CD4-positive, alpha-beta T cell (primary cell): ENCODE measurements at regions of chr7 and their contacts with region 1.

Region 1: DNA sequence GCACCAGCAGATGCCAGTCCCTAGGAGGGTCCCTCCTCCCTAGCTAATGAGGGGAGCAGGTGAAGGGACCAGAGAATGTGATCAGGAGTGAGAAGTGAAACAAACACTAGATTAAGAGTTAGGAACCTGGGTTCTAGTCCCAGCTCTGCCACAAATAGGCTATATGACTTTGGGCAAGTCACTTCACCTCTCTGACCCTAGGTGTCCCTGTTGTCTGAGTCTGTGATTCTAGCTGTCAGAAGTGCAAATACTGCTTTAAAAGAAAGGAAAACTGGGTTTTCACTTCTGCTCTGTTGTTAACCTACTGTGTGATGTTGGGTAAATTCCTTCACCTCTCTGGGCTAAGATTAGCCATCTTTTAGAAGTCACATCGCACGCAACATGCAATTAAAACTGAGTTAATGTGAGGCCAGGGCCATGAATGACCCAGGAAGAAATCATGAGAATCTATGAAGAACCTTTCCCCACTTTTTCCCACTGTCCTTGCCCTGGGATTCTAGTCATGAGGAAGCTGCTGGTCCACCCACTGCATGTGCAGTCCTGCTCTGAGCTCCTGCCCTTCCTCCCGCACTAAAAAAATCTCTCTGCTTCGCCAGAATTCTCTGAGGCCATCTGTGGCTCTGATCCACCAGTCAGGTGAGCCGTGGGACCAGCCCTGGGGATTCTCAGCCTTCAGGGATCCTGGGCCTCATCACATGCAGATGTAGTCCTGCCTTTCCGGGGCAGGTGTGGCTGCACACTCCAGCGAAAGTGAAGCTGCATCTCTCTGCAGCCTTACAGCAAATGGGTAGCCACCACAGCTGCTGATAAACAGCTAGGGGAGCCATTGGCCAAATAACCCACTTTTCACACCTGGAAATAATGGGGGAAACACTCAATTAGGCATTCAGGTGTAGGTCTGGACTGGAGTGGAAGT is 181.7 kb downstream of the PLXNA4 start:
- DNase-seq: peak in 5 of 14 experiments; percentile 11 to 66 (median 58)
- ATAC-seq: no peak
- H3K4me3 ChIP-seq: no peak overlapping the region
- H3K4me3 Mint-ChIP-seq: no peak overlapping the region
- H3K27ac ChIP-seq: no peak overlapping the region
- H3K27ac Mint-ChIP-seq: no peak overlapping the region
- H3K4me1 ChIP-seq: peaks cover 7% of the 10 kb centered on the region
- H3K4me1 Mint-ChIP-seq: peaks cover 4% of the 10 kb centered on the region
- H3K27me3 ChIP-seq: no peaks in the 10 kb centered on the region
- H3K27me3 Mint-ChIP-seq: peaks cover under 1% of the 10 kb centered on the region
- CTCF ChIP-seq: peak; percentile 63

Region 2: DNA sequence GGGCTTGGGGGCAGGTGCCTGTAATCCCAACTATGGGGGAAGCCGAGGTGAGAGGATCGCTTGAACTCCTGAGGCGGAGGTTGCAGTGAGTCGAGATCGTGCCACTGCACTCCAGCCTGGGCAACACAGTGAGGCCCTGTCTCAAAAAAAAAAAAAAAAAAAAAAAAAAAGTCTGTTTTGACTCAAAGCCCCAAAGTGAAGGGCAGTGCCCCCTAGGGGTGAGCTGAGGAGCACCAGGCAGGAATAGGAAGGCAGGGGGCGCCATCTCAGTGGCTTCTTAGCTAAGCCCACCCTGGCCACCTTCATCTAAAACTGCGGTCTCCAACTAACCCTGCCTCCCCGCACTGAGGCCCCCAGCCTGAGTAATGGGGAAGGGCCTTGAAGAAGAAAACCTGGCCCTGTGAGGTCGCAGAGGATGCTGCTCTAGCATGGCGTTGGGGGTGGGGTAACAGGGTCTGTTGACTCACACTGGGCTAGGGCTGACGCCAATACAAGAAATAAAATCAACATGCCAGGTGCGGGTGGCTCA is 847.9 kb before region 1 on chr7:
- CTCF ChIA-PET with region 1: no interaction called
- POLR2A ChIA-PET with region 1: no interaction called
- intact Hi-C with region 1: no loop called
- DNase-seq: peak in 10 of 14 experiments; percentile 3 to 73 (median 26)
- ATAC-seq: peak; percentile 59
- H3K4me3 ChIP-seq: no peak overlapping the region
- H3K4me3 Mint-ChIP-seq: no peak overlapping the region
- H3K27ac ChIP-seq: no peak overlapping the region
- H3K27ac Mint-ChIP-seq: no peak overlapping the region
- H3K4me1 ChIP-seq: no peaks in the 10 kb centered on the region
- H3K4me1 Mint-ChIP-seq: no peaks in the 10 kb centered on the region
- H3K27me3 ChIP-seq: no peaks in the 10 kb centered on the region
- H3K27me3 Mint-ChIP-seq: peaks cover 16% of the 10 kb centered on the region
- CTCF ChIP-seq: peak; percentile 44

Region 3: GRCh38 chr7:132580717-132581285 is 186.3 kb after region 1 on chr7:
- CTCF ChIA-PET with region 1: interaction called, 70 read pairs
- POLR2A ChIA-PET with region 1: interaction called, 7 read pairs
- intact Hi-C with region 1: loop called (anchors 1 kb)
- DNase-seq: peak; percentile 43 to 84 (median 58)
- ATAC-seq: peak; percentile 75
- H3K4me3 ChIP-seq: no peak overlapping the region
- H3K4me3 Mint-ChIP-seq: no peak overlapping the region
- H3K27ac ChIP-seq: no peak overlapping the region
- H3K27ac Mint-ChIP-seq: no peak overlapping the region
- H3K4me1 ChIP-seq: peaks cover 12% of the 10 kb centered on the region
- H3K4me1 Mint-ChIP-seq: peaks cover 12% of the 10 kb centered on the region
- H3K27me3 ChIP-seq: peaks cover 23 to 36% of the 10 kb centered on the region in 2 experiments
- H3K27me3 Mint-ChIP-seq: peaks cover 51% of the 10 kb centered on the region
- CTCF ChIP-seq: peak; percentile 80

Region 4: GRCh38 chr7:133095119-133095671 is 700.7 kb after region 1 on chr7:
- CTCF ChIA-PET with region 1: no interaction called
- POLR2A ChIA-PET with region 1: no interaction called
- intact Hi-C with region 1: no loop called
- DNase-seq: no peak
- ATAC-seq: no peak
- H3K4me3 ChIP-seq: no peak overlapping the region
- H3K4me3 Mint-ChIP-seq: no peak overlapping the region
- H3K27ac ChIP-seq: no peak overlapping the region
- H3K27ac Mint-ChIP-seq: no peak overlapping the region
- H3K4me1 ChIP-seq: no peaks in the 10 kb centered on the region
- H3K4me1 Mint-ChIP-seq: no peaks in the 10 kb centered on the region
- H3K27me3 ChIP-seq: peaks cover 0 to 3% of the 10 kb centered on the region in 2 experiments
- H3K27me3 Mint-ChIP-seq: peaks cover 3% of the 10 kb centered on the region
- CTCF ChIP-seq: no peak

Region 5: GRCh38 chr7:133230591-133231194 is 836.2 kb after region 1 on chr7:
- CTCF ChIA-PET with region 1: no interaction called
- POLR2A ChIA-PET with region 1: no interaction called
- intact Hi-C with region 1: loop called in 1 of 2 experiments (anchors 2 kb)
- DNase-seq: peak in 11 of 14 experiments; percentile 1 to 70 (median 28)
- ATAC-seq: no peak
- H3K4me3 ChIP-seq: no peak overlapping the region
- H3K4me3 Mint-ChIP-seq: no peak overlapping the region
- H3K27ac ChIP-seq: no peak overlapping the region
- H3K27ac Mint-ChIP-seq: no peak overlapping the region
- H3K4me1 ChIP-seq: no peaks in the 10 kb centered on the region
- H3K4me1 Mint-ChIP-seq: no peaks in the 10 kb centered on the region
- H3K27me3 ChIP-seq: no peaks in the 10 kb centered on the region
- H3K27me3 Mint-ChIP-seq: no peaks in the 10 kb centered on the region
- CTCF ChIP-seq: peak; percentile 49